ENCODE measurements at regions of chr6 and their contacts with region 1.

Region 1: GRCh38 chr6:15245361-15246216 is at the start of gene JARID2:
- DNase-seq: peak; percentile 96
- H3K4me3 ChIP-seq: peak within 1 kb of the TSS; percentile 70 to 95 (median 82)
- H3K27ac ChIP-seq: peak within 1 kb of the TSS; percentile 86
- H3K4me1 ChIP-seq: peaks cover 20% of the 10 kb centered on the region
- H3K27me3 ChIP-seq: no peaks in the 10 kb centered on the region
- CTCF ChIP-seq: no peak
- total RNA-seq, gene JARID2: 10.3 to 25.8 TPM

Region 2: GRCh38 chr6:14210663-14211561 is 1034.7 kb before region 1 on chr6:
- CTCF ChIA-PET with region 1: no interaction called
- dilution Hi-C with region 1: no loop called
- in situ Hi-C with region 1: loop called in 1 of 2 experiments (anchors 10 kb)
- intact Hi-C with region 1: loop called (anchors 1 kb)
- DNase-seq: peak; percentile 83
- H3K4me3 ChIP-seq: peak overlapping the region; percentile 63 to 81 (median 64)
- H3K27ac ChIP-seq: peak overlapping the region; percentile 72
- H3K4me1 ChIP-seq: peaks cover 21% of the 10 kb centered on the region
- H3K27me3 ChIP-seq: no peaks in the 10 kb centered on the region
- CTCF ChIP-seq: peak; percentile 42 to 55

Region 3: DNA sequence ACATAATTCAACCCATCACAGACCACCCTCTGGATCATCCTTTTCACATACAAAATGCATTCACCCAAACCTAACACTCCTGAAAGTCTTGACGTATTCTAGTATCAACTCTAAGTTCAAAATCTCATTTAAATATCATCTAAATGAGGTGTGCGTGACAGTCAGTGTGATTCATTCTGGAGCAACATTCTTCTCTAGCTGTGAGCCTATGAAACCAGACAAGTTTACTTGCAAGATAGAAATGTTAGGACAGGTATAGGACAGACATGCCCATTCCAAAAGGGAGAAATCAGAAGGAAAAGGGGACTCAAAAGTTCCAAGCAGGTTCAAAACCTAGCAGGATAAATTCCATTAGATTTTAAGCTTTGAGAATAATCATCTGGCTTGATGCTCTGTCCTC is 798.3 kb before region 1 on chr6:
- CTCF ChIA-PET with region 1: no interaction called
- dilution Hi-C with region 1: no loop called
- in situ Hi-C with region 1: no loop called
- intact Hi-C with region 1: loop called (anchors 5 kb)
- DNase-seq: peak; percentile 51
- H3K4me3 ChIP-seq: no peak overlapping the region
- H3K27ac ChIP-seq: no peak overlapping the region
- H3K4me1 ChIP-seq: no peaks in the 10 kb centered on the region
- H3K27me3 ChIP-seq: no peaks in the 10 kb centered on the region
- CTCF ChIP-seq: no peak

Region 4: DNA sequence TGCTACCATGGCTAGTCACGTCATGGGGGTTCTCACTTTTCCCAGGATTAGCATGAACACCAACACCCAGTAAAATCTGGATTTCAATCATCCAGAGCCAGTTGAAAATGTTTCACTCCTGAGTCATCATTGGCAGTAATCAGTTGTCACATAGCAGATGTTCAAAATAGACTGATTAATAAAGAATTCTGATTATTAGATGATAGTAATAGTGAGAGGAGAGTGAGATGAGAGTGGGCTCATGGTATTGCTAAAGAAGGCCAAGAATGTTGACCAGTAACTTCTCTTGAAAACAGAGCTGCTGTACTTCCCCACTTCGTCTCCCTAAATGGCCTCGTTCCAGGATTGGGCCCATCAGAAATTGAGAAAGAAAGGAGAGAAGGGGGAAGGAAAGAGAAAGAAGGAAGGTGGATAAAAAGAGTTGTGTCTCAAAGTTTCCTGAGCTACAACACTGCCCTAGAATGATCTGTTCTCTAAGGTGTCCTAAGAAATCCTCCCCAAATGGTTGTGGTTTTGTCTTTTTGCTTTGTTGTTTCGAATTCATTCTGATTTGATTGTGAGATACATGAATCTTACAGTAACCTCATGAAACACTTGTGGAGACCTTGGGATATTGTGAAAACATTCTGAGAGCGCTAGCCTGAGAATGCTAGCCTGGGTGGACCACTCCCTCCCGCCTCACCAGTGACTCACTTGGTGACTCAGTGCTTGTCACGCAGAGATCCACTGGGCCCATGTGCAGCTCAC is 502.0 kb before region 1 on chr6:
- CTCF ChIA-PET with region 1: no interaction called
- dilution Hi-C with region 1: no loop called
- in situ Hi-C with region 1: loop called in 1 of 2 experiments (anchors 25 kb)
- intact Hi-C with region 1: loop called (anchors 1 kb)
- DNase-seq: peak; percentile 99
- H3K4me3 ChIP-seq: no peak overlapping the region
- H3K27ac ChIP-seq: peak overlapping the region; percentile 99
- H3K4me1 ChIP-seq: peaks cover 31% of the 10 kb centered on the region
- H3K27me3 ChIP-seq: no peaks in the 10 kb centered on the region
- CTCF ChIP-seq: no peak

Region 5: DNA sequence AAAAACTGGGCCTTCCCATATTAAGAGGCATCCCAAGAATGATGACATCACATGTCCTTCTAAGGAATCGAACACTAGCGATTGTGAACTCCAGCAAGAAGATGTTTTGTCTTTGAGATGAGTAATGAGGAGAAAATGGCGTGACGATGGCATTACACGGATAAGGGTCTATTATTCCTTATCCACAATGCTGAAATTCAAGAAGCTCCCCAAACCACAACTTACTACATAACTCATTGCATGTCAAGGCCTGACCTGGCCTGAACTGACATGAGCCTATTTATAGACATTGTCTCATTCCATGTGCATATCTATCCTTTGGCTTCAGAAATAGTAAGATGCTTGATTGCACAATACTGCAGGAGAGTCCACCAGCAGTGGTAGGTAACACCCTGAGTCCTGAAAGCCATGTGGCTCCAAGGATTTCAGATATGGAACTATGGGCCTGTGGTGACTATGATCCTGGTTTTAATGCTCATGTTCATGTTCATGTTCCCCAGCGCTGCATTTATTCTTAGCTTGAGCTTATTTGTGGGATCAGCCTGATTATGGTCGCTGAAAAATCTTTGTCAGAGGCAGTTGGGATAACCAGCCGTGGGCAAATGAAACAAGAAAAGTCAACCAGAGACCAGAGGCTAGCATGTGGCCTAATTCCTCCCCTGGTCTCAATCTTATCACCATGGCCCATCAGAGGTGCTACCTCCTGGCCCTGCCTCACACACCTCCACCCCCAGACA is 182.9 kb before region 1 on chr6:
- CTCF ChIA-PET with region 1: no interaction called
- dilution Hi-C with region 1: no loop called
- in situ Hi-C with region 1: no loop called
- intact Hi-C with region 1: loop called (anchors 1 kb)
- DNase-seq: peak; percentile 100
- H3K4me3 ChIP-seq: no peak overlapping the region
- H3K27ac ChIP-seq: peak overlapping the region; percentile 77
- H3K4me1 ChIP-seq: peaks cover 39% of the 10 kb centered on the region
- H3K27me3 ChIP-seq: no peaks in the 10 kb centered on the region
- CTCF ChIP-seq: no peak

Region 6: GRCh38 chr6:15389765-15390723 is 144.5 kb after region 1 on chr6:
- CTCF ChIA-PET with region 1: no interaction called
- dilution Hi-C with region 1: no loop called
- in situ Hi-C with region 1: no loop called
- intact Hi-C with region 1: loop called (anchors 2 kb)
- DNase-seq: no peak
- H3K4me3 ChIP-seq: no peak overlapping the region
- H3K27ac ChIP-seq: no peak overlapping the region
- H3K4me1 ChIP-seq: peaks cover 10% of the 10 kb centered on the region
- H3K27me3 ChIP-seq: no peaks in the 10 kb centered on the region
- CTCF ChIP-seq: peak; percentile 28 to 47

Region 7: DNA sequence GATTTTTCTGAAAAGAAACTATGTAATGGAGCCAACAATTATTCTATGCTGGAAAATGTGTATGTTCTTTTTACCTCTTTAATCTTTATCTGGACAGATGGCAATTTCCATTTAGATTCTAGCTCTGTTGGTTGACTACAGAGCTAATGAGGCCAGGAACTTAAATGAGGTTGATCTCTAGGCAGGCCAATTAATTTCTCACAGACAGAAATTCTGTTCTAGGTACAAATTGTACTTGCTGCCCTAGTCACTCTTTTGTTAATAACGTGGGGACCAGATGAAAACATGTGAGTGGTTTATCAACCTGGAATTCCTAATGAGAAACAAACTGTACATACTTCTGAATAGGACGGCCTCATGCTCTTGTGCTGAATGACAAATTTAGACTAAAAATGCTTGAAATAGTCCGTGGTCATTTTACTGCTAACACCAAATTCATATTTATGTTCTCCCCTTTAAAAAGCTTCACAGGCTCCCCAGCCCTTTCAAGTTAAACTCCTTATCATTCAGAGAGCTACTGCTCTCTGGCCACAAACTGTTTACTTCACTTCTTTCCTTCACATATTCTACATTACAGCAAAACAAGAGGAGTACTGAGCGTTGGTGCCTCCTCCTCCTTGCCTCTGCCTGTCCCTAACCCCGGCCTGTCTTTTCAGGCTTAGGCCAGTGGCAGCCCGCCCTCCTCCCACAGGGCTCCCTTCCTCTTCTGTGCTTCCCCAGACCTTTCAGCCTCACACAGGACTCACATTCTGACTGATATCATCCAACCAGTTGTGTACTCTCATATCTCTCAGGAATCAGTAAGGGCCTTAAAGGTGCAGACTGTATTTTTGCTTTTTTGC is 375.8 kb after region 1 on chr6:
- CTCF ChIA-PET with region 1: no interaction called
- dilution Hi-C with region 1: no loop called
- in situ Hi-C with region 1: loop called in 1 of 2 experiments (anchors 25 kb)
- intact Hi-C with region 1: loop called (anchors 5 kb)
- DNase-seq: peak; percentile 73
- H3K4me3 ChIP-seq: no peak overlapping the region
- H3K27ac ChIP-seq: peak overlapping the region; percentile 43
- H3K4me1 ChIP-seq: peaks cover 15% of the 10 kb centered on the region
- H3K27me3 ChIP-seq: no peaks in the 10 kb centered on the region
- CTCF ChIP-seq: no peak

Measured in mammary epithelial cell (primary cell).